ENCODE measurements at regions of chr1 and their contacts with region 1.

Region 1: DNA sequence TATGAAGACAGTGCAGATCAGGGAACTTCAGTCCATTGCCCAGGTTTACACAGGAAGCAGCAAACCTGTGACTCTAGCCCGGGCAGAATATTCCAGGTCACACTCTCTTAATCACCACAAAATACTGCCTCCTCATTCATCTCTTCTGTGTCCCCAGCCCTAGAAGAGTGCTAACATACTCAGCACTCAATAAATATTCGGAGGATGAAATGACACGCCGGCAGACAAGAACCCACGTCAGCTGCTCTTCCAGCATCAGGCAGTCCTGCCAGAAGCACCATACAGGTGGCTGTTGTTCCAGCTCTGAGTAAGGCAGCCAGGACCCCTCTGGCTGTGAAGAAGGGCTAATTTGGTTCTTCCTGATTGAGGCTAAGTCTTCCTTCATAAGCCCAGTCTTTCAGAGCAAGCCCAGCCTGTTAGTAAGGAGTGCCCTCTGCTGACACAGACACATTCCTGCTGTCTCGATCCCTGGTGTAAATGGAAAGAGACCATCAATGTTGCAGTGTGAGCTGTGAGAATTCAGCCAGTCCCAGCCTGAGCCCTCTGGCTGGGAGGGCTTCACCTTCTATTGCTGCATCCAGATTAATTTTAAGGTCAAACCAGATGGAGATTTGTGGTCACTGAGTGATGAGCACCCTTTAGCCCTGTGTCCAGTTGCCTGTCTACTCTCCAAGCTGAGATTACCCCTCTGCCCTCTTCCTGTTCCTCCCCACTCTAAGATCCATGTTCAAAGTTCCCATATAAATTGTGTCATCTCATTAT is 45.0 kb upstream of the KIRREL1 start:
- DNase-seq: peak; percentile 35
- H3K4me3 ChIP-seq: no peak overlapping the region
- H3K27ac ChIP-seq: no peak overlapping the region
- H3K4me1 ChIP-seq: no peaks in the 10 kb centered on the region
- H3K27me3 ChIP-seq: no peaks in the 10 kb centered on the region
- CTCF ChIP-seq: peak; percentile 77 to 87

Region 2: DNA sequence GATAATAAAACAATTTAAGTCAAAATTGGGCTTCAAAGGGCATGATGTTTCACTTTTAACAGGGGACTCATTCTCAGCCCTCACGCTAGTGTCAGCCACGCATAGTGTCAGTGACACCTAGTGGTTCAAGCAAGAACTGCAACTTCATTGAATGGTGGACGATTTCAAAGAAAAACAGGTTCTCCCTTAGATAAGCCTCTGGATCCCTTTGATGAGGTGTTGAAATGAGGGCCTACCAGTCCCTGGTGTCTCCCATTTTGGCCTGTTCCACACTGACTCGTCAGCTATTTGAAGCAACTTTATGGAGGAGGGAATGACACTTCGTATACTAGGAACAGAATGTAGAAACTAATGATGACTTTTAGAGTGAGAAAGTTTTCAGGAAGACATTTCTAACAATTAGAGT is 452.4 kb before region 1 on chr1:
- CTCF ChIA-PET with region 1: no interaction called
- dilution Hi-C with region 1: no loop called
- in situ Hi-C with region 1: no loop called
- intact Hi-C with region 1: loop called (anchors 5 kb)
- DNase-seq: peak; percentile 32
- H3K4me3 ChIP-seq: no peak overlapping the region
- H3K27ac ChIP-seq: no peak overlapping the region
- H3K4me1 ChIP-seq: no peaks in the 10 kb centered on the region
- H3K27me3 ChIP-seq: no peaks in the 10 kb centered on the region
- CTCF ChIP-seq: peak; percentile 87 to 89

Region 3: DNA sequence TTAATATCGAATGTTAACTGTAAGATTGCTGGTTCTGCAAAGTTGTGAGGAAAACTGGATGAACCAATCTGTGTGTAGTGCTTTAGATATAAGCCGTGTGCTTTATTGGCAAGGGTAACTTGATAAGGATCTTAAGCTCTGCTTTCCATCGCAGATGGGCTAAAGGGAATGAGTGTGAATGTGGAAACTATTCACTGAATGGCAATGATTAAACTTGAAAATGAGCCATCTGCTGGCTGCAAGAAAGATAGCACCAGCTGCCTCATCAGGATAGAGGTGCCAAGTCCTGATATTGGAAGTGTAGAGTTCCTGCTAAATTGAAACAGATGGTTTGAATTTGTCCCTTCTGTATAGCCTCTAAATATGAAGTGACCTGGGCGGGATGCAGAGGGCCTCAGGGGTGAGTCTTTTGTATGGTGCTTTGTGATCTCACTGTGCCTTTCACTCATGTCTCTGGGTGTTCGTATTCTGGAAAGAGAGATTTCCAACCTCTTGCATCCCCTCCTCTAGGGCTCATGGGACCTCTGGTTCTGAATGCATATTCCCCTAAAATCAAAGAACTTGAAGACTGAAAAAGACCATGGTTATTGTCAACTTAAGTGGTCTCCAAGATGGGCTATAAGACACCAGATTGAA is 257.1 kb before region 1 on chr1:
- CTCF ChIA-PET with region 1: no interaction called
- dilution Hi-C with region 1: no loop called
- in situ Hi-C with region 1: no loop called
- intact Hi-C with region 1: loop called (anchors 1 kb)
- DNase-seq: peak; percentile 14
- H3K4me3 ChIP-seq: no peak overlapping the region
- H3K27ac ChIP-seq: no peak overlapping the region
- H3K4me1 ChIP-seq: no peaks in the 10 kb centered on the region
- H3K27me3 ChIP-seq: peaks cover 2% of the 10 kb centered on the region
- CTCF ChIP-seq: peak; percentile 53 to 72

Region 4: GRCh38 chr1:157781048-157781447 is 167.4 kb before region 1 on chr1:
- CTCF ChIA-PET with region 1: no interaction called
- dilution Hi-C with region 1: loop called (anchors 25 kb)
- in situ Hi-C with region 1: no loop called
- intact Hi-C with region 1: no loop called
- DNase-seq: no peak
- H3K4me3 ChIP-seq: no peak overlapping the region
- H3K27ac ChIP-seq: no peak overlapping the region
- H3K4me1 ChIP-seq: no peaks in the 10 kb centered on the region
- H3K27me3 ChIP-seq: peaks cover 2% of the 10 kb centered on the region
- CTCF ChIP-seq: no peak

Region 5: DNA sequence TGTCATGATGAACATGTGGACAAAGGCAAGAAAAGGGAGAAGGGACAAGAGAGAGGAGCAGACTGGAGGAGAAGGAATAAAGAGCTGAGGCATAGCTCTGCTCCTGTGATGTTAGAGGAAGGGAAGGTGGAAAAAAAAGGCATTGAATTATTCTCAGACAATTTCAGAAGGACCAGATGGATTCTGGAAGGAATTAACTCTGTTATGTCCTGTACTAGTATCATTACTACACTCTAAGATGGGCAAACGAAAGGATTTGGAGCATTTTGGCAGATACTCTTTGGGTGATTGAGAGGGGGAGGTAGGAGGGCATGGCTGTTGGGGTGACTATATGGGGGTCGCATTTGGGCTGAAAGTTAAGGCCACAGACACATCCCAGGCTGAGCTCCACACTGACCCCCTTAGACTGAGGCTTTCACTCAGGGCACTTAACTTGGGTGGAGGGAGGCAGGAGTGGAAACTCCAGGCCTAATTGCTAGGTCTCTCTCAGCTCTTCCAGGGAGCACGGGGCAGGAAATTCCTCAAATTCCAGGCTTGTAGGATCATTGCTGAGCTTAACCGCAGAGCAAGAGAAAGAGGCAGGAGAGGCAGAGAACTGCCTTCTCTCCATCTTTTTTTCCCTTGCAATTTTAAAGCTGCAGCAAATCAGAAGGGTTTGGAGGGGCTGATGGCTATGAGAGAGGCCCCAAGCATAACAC is 70.8 kb after region 1 on chr1:
- CTCF ChIA-PET with region 1: no interaction called
- dilution Hi-C with region 1: no loop called
- in situ Hi-C with region 1: no loop called
- intact Hi-C with region 1: no loop called
- DNase-seq: peak; percentile 87
- H3K4me3 ChIP-seq: no peak overlapping the region
- H3K27ac ChIP-seq: peak overlapping the region; percentile 76
- H3K4me1 ChIP-seq: peaks cover 87% of the 10 kb centered on the region
- H3K27me3 ChIP-seq: no peaks in the 10 kb centered on the region
- CTCF ChIP-seq: no peak

Measured in mammary epithelial cell (primary cell).